Activated B cell treated with CpG ODN at 0.5 μM for 24 hours (primary cell): ENCODE measurements at regions of chr1 and their contacts with region 1.

Region 1: DNA sequence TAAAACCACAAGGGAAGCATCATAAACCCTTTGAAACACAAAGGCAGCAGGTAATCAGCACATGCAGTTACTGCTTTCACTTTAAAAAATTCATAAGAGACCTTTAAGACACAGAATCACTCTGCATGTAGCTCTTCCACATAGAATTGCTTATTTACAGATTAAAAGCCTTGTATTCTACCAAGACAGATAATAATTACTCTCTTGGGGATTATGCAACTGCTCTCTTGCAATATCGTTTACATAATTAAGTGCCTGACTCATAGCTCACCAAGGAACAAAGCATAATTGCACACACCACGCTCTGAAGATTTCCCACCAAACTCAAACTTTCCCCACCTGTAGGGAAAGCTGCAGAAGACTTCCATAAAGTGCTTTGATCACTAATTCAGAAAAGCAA is 87.9 kb downstream of the VAV3 start:
- DNase-seq: no peak
- ATAC-seq: peak; percentile 70
- H3K4me3 Mint-ChIP-seq: peak overlapping the region; percentile 62
- H3K27ac Mint-ChIP-seq: peak overlapping the region; percentile 75
- H3K4me1 Mint-ChIP-seq: peaks cover 87% of the 10 kb centered on the region
- H3K27me3 Mint-ChIP-seq: no peaks in the 10 kb centered on the region
- CTCF ChIP-seq: no peak

Region 2: GRCh38 chr1:107767156-107767582 is 109.9 kb before region 1 on chr1:
- CTCF ChIA-PET with region 1: no interaction called
- POLR2A ChIA-PET with region 1: no interaction called
- intact Hi-C with region 1: no loop called
- DNase-seq: no peak
- ATAC-seq: no peak
- H3K4me3 Mint-ChIP-seq: no peak overlapping the region
- H3K27ac Mint-ChIP-seq: no peak overlapping the region
- H3K4me1 Mint-ChIP-seq: no peaks in the 10 kb centered on the region
- H3K27me3 Mint-ChIP-seq: no peaks in the 10 kb centered on the region
- CTCF ChIP-seq: no peak

Region 3: DNA sequence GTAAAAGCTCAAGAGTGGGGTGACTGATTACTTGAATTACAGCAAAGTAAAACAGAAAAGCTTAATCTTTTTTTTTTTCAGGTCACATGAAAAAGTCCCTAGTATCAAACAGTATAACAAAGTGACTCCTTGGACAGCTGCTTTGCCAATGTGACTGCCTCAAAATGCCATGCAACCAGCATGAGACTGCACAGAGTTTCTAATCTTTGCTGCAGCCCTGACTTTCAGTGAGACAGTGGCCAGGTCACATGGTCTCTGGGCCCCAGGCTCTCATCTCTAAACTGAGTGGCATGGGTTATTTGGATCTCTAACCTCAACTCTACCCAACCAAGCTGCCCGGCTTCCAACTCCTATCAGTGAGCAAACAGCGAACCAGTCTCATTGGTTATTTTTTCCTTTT is 81.1 kb before region 1 on chr1:
- CTCF ChIA-PET with region 1: interaction called, 3 read pairs
- POLR2A ChIA-PET with region 1: interaction called, 5 read pairs
- intact Hi-C with region 1: loop called (anchors 1 kb)
- DNase-seq: no peak
- ATAC-seq: peak; percentile 68
- H3K4me3 Mint-ChIP-seq: peak overlapping the region; percentile 73
- H3K27ac Mint-ChIP-seq: peak overlapping the region; percentile 90
- H3K4me1 Mint-ChIP-seq: peaks cover 80% of the 10 kb centered on the region
- H3K27me3 Mint-ChIP-seq: no peaks in the 10 kb centered on the region
- CTCF ChIP-seq: no peak

Region 4: GRCh38 chr1:107804134-107804533 is 73.0 kb before region 1 on chr1:
- CTCF ChIA-PET with region 1: no interaction called
- POLR2A ChIA-PET with region 1: no interaction called
- intact Hi-C with region 1: loop called (anchors 2 kb)
- DNase-seq: no peak
- ATAC-seq: peak; percentile 35
- H3K4me3 Mint-ChIP-seq: peak overlapping the region; percentile 80
- H3K27ac Mint-ChIP-seq: peak overlapping the region; percentile 96
- H3K4me1 Mint-ChIP-seq: peaks cover 94% of the 10 kb centered on the region
- H3K27me3 Mint-ChIP-seq: no peaks in the 10 kb centered on the region
- CTCF ChIP-seq: no peak

Region 5: DNA sequence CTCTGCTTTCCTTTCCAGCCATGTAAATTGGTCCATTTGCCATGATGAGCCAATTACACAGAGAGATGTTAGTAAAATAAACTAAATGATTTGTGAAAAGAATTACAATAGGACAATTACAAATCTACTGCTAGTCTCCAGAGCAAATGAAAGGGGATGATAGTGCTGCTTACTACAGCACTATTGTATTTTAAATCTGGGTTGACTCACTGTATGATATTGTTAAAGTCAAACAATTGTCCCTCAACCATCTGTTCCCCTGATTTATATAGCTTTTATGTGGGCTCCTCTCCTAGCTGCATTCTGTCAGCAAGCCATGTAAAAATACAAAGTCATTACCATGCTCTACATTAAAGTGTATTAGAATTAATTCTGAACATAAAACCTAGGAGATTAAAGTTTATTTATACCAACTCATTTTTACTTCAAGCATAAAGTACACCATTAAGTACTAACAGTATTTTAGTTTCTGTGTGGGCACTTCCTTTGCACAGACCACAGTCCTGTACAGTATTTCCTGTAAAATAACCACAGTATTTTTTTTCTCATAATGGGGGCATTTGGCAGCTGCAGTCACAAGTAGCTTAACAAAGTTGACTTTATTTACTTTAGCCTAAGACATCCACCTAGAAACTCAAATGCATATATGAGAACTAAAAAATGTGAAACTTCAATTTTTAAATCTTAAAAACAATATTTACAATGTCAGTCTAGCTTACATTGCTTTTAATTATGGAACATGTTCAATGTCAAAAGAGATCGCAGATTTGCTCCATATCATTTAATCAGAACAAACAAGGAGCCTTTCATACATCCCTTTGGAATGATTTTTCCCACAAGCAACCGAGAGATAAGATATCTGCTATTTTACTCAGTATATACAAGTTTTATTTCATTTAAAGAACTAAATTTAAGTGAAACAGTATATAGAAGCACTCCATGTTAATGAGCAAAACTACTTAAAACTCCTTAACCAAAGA is 47.7 kb before region 1 on chr1:
- CTCF ChIA-PET with region 1: no interaction called
- POLR2A ChIA-PET with region 1: interaction called, 6 read pairs
- intact Hi-C with region 1: loop called (anchors 2 kb)
- DNase-seq: no peak
- ATAC-seq: peak; percentile 80
- H3K4me3 Mint-ChIP-seq: peak overlapping the region; percentile 65
- H3K27ac Mint-ChIP-seq: peak overlapping the region; percentile 89
- H3K4me1 Mint-ChIP-seq: peaks cover 89% of the 10 kb centered on the region
- H3K27me3 Mint-ChIP-seq: no peaks in the 10 kb centered on the region
- CTCF ChIP-seq: no peak

Region 6: GRCh38 chr1:107862064-107862463 is 15.0 kb before region 1 on chr1:
- CTCF ChIA-PET with region 1: no interaction called
- POLR2A ChIA-PET with region 1: no interaction called
- intact Hi-C with region 1: loop called (anchors 2 kb)
- DNase-seq: no peak
- ATAC-seq: peak; percentile 87
- H3K4me3 Mint-ChIP-seq: peak overlapping the region; percentile 44
- H3K27ac Mint-ChIP-seq: peak overlapping the region; percentile 62
- H3K4me1 Mint-ChIP-seq: peaks cover 71% of the 10 kb centered on the region
- H3K27me3 Mint-ChIP-seq: no peaks in the 10 kb centered on the region
- CTCF ChIP-seq: no peak

Region 7: GRCh38 chr1:108211014-108211671 is 334.1 kb after region 1 on chr1:
- CTCF ChIA-PET with region 1: no interaction called
- POLR2A ChIA-PET with region 1: no interaction called
- intact Hi-C with region 1: no loop called
- DNase-seq: no peak
- ATAC-seq: no peak
- H3K4me3 Mint-ChIP-seq: no peak overlapping the region
- H3K27ac Mint-ChIP-seq: no peak overlapping the region
- H3K4me1 Mint-ChIP-seq: peaks cover 5% of the 10 kb centered on the region
- H3K27me3 Mint-ChIP-seq: peaks cover 18% of the 10 kb centered on the region
- CTCF ChIP-seq: no peak

Region 8: DNA sequence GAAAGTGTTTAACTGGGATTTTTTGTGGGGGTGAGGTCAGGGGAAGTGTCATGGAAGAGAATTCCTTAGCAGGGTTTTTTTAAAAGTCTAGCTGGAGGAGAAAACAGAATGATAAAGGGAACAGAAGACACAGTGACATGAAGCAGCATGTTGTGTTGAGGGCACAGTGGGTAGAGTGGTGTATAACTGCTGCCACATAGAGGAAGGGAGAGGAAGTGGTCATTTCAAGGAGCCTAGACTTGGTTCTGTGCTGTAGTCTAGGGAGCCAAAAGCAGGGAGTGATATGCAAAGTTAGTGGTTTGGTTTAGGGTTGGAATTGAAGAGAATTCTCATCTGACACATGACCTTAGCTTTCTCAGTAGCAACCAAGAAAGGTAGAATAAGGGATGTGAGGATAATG is 693.0 kb after region 1 on chr1:
- CTCF ChIA-PET with region 1: no interaction called
- POLR2A ChIA-PET with region 1: no interaction called
- intact Hi-C with region 1: no loop called
- DNase-seq: no peak
- ATAC-seq: peak; percentile 97
- H3K4me3 Mint-ChIP-seq: no peak overlapping the region
- H3K27ac Mint-ChIP-seq: no peak overlapping the region
- H3K4me1 Mint-ChIP-seq: no peaks in the 10 kb centered on the region
- H3K27me3 Mint-ChIP-seq: no peaks in the 10 kb centered on the region
- CTCF ChIP-seq: no peak